ENCODE measurements at regions of chr4 and their contacts with region 1.

Region 1: DNA sequence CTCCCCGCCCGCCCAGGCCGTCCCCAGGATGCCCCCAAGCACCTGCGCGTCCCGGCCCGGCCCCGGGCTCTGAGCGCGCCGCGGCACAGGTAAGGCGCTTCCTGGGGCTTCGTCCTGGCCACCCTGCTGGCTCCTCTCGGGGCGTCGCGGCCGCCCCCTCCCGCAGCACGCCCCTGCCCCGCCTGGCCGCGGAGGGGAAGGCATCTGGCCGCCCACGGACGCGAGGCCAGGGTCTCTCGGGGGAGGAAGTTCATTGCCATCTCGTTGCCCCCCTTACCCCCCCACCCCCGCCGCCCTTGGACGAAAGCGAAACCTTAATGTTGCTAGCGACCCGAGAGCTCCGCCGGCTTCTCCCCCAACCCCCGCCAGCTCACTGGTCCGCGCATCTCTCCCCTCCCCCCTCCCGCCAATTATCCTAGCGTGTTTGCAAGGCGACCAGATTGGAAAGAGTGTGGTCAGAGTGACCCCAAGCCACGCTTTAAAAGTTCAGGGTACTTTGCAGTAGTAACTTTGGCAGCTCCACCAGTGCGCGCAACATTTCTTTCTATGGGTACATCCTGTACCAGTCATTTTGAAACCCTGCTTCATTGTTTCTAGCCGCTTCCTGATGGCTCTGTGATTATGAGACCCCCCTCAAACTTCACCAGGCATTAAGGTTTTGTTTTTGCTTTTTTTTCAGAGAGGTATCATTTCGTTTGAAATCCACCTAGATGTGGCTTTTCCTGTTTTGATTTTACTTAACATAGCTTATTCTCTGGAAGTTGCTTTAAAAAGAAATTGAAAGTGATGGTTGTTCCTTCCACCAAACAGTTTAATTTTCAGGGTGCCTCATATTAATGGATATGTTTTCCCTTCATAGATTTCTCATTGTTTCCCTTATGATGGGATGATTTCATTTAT is 626 bp downstream of the TBC1D1 start:
- DNase-seq: peak; percentile 81
- ATAC-seq: peak; percentile 73
- H3K4me3 Mint-ChIP-seq: peak overlapping the region; percentile 95
- H3K27ac Mint-ChIP-seq: peak overlapping the region; percentile 97
- H3K4me1 Mint-ChIP-seq: peaks cover 45% of the 10 kb centered on the region
- H3K27me3 Mint-ChIP-seq: no peaks in the 10 kb centered on the region

Region 2: GRCh38 chr4:37826295-37827029 is 65.0 kb before region 1 on chr4 and contains the start of gene PGM2:
- CTCF ChIA-PET with region 1: interaction called, 3 read pairs
- POLR2A ChIA-PET with region 1: interaction called, 14 read pairs
- DNase-seq: peak; percentile 93
- ATAC-seq: peak; percentile 99
- H3K4me3 Mint-ChIP-seq: peak within 1 kb of the TSS; percentile 97
- H3K27ac Mint-ChIP-seq: peak within 1 kb of the TSS; percentile 95
- H3K4me1 Mint-ChIP-seq: peaks cover 48% of the 10 kb centered on the region
- H3K27me3 Mint-ChIP-seq: peaks cover 4% of the 10 kb centered on the region
- total RNA-seq, gene PGM2: 49.2 to 54.5 TPM

Region 3: GRCh38 chr4:37872310-37872988 is 19.1 kb before region 1 on chr4:
- CTCF ChIA-PET with region 1: interaction called, 3 read pairs
- POLR2A ChIA-PET with region 1: interaction called, 13 read pairs
- DNase-seq: no peak
- ATAC-seq: peak; percentile 79
- H3K4me3 Mint-ChIP-seq: peak overlapping the region; percentile 20
- H3K27ac Mint-ChIP-seq: peak overlapping the region; percentile 44
- H3K4me1 Mint-ChIP-seq: peaks cover 23% of the 10 kb centered on the region
- H3K27me3 Mint-ChIP-seq: no peaks in the 10 kb centered on the region

Region 4: GRCh38 chr4:37922328-37922727 is 30.8 kb after region 1 on chr4:
- CTCF ChIA-PET with region 1: no interaction called
- POLR2A ChIA-PET with region 1: no interaction called
- DNase-seq: no peak
- ATAC-seq: peak; percentile 42
- H3K4me3 Mint-ChIP-seq: no peak overlapping the region
- H3K27ac Mint-ChIP-seq: no peak overlapping the region
- H3K4me1 Mint-ChIP-seq: peaks cover 5% of the 10 kb centered on the region
- H3K27me3 Mint-ChIP-seq: no peaks in the 10 kb centered on the region

Region 5: DNA sequence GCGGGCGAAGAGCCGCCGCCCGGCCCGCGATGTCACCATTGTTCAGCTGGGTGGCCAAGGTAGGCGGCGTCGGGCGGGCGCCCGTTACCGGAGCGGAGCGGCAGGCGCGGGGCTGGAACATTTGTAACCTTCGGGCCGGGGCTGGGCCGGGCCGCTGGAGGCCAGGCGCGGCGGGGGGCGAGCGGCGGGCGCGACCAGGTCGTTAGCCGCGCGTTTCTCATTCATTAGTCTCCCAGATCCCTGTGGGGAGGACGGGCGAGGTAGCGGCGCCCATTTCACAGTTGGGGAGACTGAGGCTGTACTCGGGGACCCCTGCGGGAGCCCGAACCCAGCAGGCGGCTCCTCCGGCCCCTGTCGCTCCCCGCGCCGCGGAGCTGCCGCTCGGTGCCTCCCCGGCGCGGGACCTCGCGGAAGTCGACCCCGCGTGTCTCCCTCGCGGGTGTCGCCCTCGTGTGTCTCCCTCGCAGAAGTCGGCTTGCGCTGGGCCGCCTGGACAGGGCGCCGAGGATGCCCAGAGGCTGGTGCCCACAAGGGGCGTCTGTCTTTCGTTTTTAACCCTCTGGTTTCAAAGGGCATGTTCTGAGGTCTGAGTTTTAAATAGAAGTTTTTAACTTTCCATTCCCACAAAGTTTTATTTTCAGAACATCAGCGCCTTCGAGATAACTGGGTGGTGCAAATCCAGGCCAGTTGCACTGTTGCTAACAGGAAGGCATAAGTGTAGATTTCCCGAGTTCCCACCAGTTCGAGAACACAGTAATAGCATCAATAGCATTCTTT is 86.1 kb after region 1 on chr4:
- CTCF ChIA-PET with region 1: interaction called, 7 read pairs
- POLR2A ChIA-PET with region 1: interaction called, 23 read pairs
- DNase-seq: peak; percentile 81
- ATAC-seq: peak; percentile 88
- H3K4me3 Mint-ChIP-seq: peak overlapping the region; percentile 83
- H3K27ac Mint-ChIP-seq: peak overlapping the region; percentile 79
- H3K4me1 Mint-ChIP-seq: peaks cover 39% of the 10 kb centered on the region
- H3K27me3 Mint-ChIP-seq: no peaks in the 10 kb centered on the region

Region 6: DNA sequence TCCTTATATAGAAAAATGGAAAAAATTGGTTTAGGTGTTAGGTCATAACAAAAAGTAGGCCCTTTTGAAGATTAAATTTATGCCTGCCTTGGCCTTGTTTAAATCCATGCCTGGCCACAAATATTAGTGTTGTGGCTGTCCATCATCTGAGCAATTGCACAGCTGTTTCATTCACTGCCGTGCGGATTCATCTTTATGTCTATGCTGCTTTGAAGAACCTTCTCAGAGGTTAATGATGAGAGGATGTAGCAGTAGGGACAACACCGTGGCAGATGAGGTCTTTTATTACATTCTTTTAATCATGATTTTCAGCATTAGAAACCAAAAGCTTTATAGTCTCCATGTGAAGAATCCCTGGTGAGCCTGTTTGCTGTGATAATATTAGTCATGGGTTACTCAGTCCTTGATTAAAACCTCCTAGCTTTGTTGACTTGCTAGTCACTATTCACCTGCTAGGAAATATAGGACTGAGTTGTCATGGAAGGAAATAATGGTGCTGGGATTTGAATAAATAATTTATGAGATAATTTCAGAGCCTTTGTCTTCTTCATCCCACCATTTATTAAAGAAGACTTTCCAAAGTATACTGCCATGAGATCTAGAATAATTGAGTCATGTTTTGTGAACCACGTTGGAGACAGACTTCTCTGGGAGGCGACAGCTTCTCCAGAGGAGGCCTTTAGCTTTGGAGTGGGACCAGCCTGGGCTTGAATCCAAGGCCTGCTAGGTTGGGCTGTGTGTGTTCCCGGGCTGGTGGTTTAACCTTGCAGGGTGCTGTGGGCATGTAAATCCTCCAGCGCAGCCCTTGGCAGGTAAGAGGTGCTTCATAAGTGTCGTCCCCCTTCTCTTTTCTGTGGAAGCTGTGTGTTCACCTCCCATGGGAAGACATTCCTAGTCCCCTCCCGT is 122.2 kb after region 1 on chr4:
- CTCF ChIA-PET with region 1: no interaction called
- POLR2A ChIA-PET with region 1: no interaction called
- DNase-seq: no peak
- ATAC-seq: no peak
- H3K4me3 Mint-ChIP-seq: no peak overlapping the region
- H3K27ac Mint-ChIP-seq: no peak overlapping the region
- H3K4me1 Mint-ChIP-seq: no peaks in the 10 kb centered on the region
- H3K27me3 Mint-ChIP-seq: no peaks in the 10 kb centered on the region